Lower leg skin (tissue), 4 donors: ENCODE measurements at regions of chr1 and their contacts with region 1.

Region 1: DNA sequence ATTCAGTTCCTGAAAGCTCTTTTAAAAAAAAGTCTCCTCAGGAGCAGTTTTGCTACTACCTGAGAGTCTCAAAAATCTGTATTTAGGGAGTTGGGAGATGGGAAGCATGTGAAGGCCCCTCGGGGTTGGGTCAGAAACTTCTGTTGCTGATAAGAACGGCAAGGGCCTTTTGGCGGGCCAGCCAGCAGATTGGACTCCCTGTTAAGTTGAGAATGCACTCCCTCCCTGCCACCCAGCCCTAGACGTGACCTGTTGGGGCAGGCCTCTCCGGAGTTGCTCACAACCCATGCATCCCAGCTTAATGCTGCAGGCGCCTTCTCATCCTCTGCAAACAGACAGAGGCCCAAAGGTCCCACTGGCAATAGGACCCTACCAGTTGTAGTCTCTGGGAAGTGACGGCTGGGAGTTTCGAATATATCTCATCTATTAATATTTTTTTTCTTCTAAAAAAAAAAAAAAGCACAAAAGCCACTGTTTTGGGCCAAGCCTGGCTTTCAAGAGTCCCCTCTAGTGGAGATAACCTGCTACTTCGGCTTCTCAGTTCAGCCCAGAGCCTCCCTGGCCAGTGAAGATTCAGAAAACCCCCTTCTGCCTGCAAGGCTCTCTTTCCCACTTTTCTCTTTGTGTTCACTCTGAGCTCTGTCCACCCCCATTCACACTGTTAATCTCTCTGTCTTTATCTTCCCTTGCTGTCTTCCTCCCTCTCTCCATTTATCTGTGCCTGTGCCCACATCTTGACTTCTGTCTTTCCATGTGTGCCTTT is 5.3 kb downstream of the PLXNA2 start:
- DNase-seq: peak in 1 of 2 donors; percentile 86
- H3K4me3 ChIP-seq: no peak overlapping the region
- CTCF ChIP-seq: no peak
- POLR2A ChIP-seq: no peak

Region 2: GRCh38 chr1:208132287-208132883 is 106.5 kb before region 1 on chr1:
- intact Hi-C with region 1: loop called (anchors 5 kb)
- DNase-seq: peak; percentile 71 to 95
- H3K4me3 ChIP-seq: no peak overlapping the region
- CTCF ChIP-seq: peak in 1 of 3 donors; percentile 57
- POLR2A ChIP-seq: no peak

Region 3: DNA sequence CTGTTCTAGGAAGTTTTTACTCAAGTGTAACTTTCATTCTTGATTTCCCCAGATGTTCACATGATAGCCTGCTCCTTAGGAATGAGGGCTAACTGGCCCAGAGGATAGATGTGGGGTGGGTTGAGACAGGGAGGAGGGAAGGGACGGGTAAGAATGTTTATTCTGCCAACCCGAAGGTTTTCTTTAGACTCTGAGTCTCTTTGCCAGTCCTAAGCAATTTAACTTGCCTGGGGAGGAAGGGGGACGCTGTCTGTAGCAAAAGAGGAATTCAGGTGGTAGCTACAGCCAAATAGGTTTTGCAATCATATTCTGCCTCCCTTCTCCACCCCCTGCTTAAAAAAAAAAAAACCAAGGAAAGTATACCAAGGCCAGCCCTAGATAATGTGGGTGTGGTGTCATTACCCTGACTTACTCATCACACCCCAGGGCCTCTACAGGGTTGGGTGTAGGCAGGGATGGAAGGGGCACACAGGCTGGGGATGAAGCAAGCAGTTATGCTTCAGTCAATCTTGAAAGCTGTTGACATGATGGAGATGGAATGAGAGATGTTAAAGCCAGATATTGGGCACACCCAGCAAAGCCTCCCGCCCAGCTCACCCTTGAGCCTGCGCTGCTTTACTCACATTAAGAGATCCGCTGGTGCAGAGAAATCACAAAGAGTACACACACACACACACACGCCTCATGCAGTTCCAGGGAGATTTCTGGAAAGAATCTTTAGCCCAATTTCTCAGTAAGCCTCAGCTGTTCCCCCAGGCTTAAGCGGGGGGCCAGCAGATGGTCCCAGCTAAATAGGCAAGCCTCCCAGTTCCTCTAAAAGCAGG is 54.6 kb before region 1 on chr1:
- intact Hi-C with region 1: loop called (anchors 10 kb)
- DNase-seq: peak; percentile 87 to 88
- H3K4me3 ChIP-seq: no peak overlapping the region
- CTCF ChIP-seq: no peak
- POLR2A ChIP-seq: no peak

Region 4: GRCh38 chr1:208223136-208223535 is 15.8 kb before region 1 on chr1:
- intact Hi-C with region 1: no loop called
- DNase-seq: no peak
- H3K4me3 ChIP-seq: no peak overlapping the region
- CTCF ChIP-seq: no peak
- POLR2A ChIP-seq: no peak